ENCODE measurements at regions of chrX and their contacts with region 1.

Region 1: GRCh38 chrX:68183612-68184214 is 249.6 kb downstream of the OPHN1 start:
- DNase-seq: peak; percentile 14 to 60 (median 14)
- ATAC-seq: peak; percentile 81
- H3K4me3 ChIP-seq: no peak overlapping the region
- H3K27ac ChIP-seq: no peak overlapping the region
- H3K4me1 ChIP-seq: peaks cover 0 to 16% of the 10 kb centered on the region in 2 experiments; a peak in 3 of 5 replicates
- H3K27me3 ChIP-seq: no peaks in the 10 kb centered on the region
- CTCF ChIP-seq: peak; percentile 30 to 62 (median 45); a peak in 4 of 6 replicates
- EP300 ChIP-seq: no peak
- POLR2A ChIP-seq: no peak
- RAD21 ChIP-seq: peak; percentile 41 to 66

Region 2: DNA sequence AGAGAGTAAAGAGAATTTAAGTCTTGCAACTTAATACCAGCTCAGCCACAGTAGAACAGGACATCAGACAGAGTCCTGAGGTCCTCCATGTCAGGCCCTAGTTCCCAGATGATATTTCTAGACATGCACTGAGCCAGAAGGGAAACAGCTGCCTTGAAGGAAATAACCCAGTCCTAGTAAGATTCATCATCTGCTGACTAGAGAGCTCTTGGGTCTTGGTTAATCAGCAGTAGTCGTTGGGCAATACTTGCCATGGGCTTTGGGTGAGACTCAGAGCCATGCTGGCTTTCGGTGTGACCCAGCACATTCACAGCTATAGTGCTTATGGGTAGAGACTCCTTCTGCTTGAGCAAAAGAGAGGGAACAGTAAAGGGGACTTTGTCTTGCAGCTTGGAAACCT is 260.7 kb before region 1 on chrX:
- CTCF ChIA-PET with region 1: no interaction called
- POLR2A ChIA-PET with region 1: no interaction called
- in situ Hi-C with region 1: no loop called
- intact Hi-C with region 1: no loop called
- DNase-seq: no peak
- ATAC-seq: no peak
- H3K4me3 ChIP-seq: no peak overlapping the region
- H3K27ac ChIP-seq: no peak overlapping the region
- H3K4me1 ChIP-seq: no peaks in the 10 kb centered on the region
- H3K27me3 ChIP-seq: no peaks in the 10 kb centered on the region
- CTCF ChIP-seq: no peak
- EP300 ChIP-seq: no peak
- POLR2A ChIP-seq: no peak
- RAD21 ChIP-seq: no peak

Region 3: DNA sequence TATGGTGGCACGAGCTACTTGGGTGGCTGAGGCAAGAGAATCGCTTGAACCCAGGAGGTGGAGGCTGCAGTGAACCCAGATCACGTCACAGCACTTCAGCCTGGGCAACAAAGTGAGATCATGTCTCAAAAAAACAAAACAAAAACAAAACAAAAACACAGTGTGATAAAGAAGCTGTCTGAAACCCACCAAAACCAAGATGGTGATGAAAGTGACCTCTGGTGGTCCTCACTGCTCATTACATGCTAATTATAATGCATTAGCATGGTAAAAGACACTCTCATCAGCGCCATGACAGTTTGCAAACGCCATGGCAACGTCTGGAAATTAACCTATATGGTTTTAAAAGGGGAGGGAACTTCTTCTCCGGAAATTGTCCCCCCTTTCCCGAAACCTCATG is 278.9 kb after region 1 on chrX:
- CTCF ChIA-PET with region 1: no interaction called
- POLR2A ChIA-PET with region 1: no interaction called
- in situ Hi-C with region 1: no loop called
- intact Hi-C with region 1: loop called (anchors 5 kb)
- DNase-seq: peak in 3 of 4 experiments; percentile 8 to 67 (median 10)
- ATAC-seq: peak; percentile 92
- H3K4me3 ChIP-seq: no peak overlapping the region
- H3K27ac ChIP-seq: peak overlapping the region; percentile 47; the same call in 2 of the 3 replicates
- H3K4me1 ChIP-seq: no peaks in the 10 kb centered on the region
- H3K27me3 ChIP-seq: no peaks in the 10 kb centered on the region; a peak in 1 of 5 replicates
- CTCF ChIP-seq: peak; percentile 59 to 73 (median 71)
- EP300 ChIP-seq: no peak
- POLR2A ChIP-seq: no peak
- RAD21 ChIP-seq: peak; percentile 70 to 87

Region 4: DNA sequence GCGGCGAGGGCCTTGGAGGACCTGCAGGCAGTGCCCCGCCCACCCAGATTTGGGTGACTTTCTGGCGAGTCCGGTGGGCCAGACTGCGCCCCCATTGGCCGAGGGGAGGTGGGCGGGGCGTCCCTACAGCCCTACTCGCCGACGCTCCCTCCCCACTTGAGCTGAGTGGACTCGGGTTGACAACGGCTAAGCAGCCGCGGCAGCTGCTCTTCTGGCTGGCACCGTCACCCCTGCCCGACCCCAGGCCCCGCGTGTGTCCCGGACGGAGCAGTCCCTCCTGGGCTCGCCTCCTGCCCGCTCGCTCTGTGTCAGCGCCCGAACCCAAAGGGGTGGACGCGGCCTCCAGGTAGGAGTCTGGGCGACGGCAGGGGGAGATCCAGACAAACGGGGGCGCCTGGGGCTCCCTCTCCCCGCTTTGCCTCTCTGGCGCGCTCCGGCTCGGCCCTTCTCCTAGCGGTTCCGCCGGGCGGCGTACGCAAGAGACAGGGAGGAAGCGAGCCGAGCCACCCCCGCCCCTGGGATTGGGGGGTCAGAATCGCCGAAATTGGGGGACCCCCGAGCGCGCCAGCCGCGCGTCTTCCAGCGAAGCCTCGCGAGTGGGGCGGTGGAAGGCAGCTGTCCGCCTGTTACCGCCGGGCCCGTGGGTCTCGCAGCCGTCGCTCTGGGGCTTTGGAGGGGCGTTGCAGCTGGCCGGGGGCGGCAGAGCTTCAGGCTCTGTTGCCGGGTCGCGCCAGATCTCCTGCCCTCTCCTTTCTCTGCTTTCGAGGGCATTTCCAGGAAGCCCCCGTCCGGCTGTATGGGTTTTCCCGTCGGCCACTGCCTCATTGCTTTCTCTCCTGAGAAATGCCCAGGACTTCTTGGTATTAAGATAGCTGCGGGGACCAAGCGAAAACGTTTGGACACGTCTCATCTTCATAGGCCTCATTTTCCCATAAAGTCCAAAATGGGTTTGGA is 510.0 kb after region 1 on chrX:
- CTCF ChIA-PET with region 1: no interaction called
- POLR2A ChIA-PET with region 1: no interaction called
- in situ Hi-C with region 1: no loop called
- intact Hi-C with region 1: loop called (anchors 10 kb)
- DNase-seq: peak; percentile 83 to 87 (median 86)
- ATAC-seq: peak; percentile 84
- H3K4me3 ChIP-seq: peak overlapping the region; percentile 62
- H3K27ac ChIP-seq: peak overlapping the region; percentile 67
- H3K4me1 ChIP-seq: peaks cover 6 to 16% of the 10 kb centered on the region in 2 experiments; a peak in 4 of 5 replicates
- H3K27me3 ChIP-seq: peaks cover 0 to 8% of the 10 kb centered on the region in 2 experiments; a peak in 1 of 5 replicates
- CTCF ChIP-seq: no peak
- EP300 ChIP-seq: no peak
- POLR2A ChIP-seq: peak; percentile 85
- RAD21 ChIP-seq: no peak

Region 5: DNA sequence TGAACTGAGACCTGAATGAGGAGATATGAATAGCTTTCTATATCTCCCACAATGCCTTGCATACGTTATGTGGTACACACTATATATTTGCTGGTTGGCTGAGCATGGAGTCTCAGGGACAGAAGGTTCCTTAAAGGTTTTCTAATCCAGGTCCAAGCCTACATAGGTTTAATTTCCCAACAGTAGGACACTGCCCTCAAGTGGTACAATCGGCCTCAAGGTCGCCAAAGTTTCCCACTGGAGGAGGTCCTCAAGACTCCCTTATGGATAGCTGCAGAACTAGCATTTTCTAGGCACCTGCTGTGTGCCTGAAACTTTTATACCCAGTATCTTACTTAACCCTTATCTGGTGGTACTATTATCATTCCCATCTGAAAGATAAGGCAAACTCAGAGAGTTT is 624.1 kb after region 1 on chrX:
- CTCF ChIA-PET with region 1: no interaction called
- POLR2A ChIA-PET with region 1: no interaction called
- in situ Hi-C with region 1: loop called (anchors 25 kb)
- intact Hi-C with region 1: loop called (anchors 5 kb)
- DNase-seq: peak in 2 of 4 experiments; percentile 31 to 47
- ATAC-seq: peak; percentile 85
- H3K4me3 ChIP-seq: no peak overlapping the region
- H3K27ac ChIP-seq: no peak overlapping the region
- H3K4me1 ChIP-seq: no peaks in the 10 kb centered on the region
- H3K27me3 ChIP-seq: no peaks in the 10 kb centered on the region
- CTCF ChIP-seq: peak; percentile 36 to 58 (median 46); a peak in 5 of 6 replicates
- EP300 ChIP-seq: no peak
- POLR2A ChIP-seq: no peak
- RAD21 ChIP-seq: peak; percentile 44 to 71; a peak in 3 of 4 replicates